Caco-2 (cell line): ENCODE measurements at regions of chr11 and their contacts with region 1.

Region 1: GRCh38 chr11:47373876-47374720 is 4.2 kb downstream of the SPI1 start:
- DNase-seq: peak; percentile 78 to 88
- H3K4me3 ChIP-seq: no peak overlapping the region
- H3K4me3 Mint-ChIP-seq: no peak overlapping the region
- H3K27ac Mint-ChIP-seq: no peak overlapping the region
- H3K4me1 ChIP-seq: peaks cover 4% of the 10 kb centered on the region; the same call in 1 of the 2 replicates
- H3K4me1 Mint-ChIP-seq: peaks cover 7% of the 10 kb centered on the region
- H3K27me3 ChIP-seq: no peaks in the 10 kb centered on the region
- H3K27me3 Mint-ChIP-seq: no peaks in the 10 kb centered on the region
- CTCF ChIP-seq: peak; percentile 95 to 96

Region 2: DNA sequence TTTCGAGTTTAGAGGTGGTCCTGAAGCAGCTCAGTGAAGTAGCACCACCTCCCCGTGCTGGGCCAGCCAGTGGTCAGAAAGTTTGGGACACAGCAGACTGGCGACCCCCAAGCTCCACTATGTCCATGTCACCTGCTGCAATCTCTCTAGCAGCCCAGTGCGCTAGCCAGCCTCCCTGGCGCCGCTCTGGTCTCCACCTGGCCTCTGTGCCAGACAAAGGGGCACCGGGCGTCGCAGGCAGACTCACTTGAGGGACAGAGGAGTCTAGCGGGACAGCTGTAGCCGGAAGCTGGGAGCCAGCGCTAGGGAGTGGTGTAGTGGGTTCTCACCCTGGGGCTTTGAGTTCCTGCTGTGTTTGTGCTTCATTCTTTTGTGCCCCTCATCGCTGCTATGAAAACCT is 47.1 kb before region 1 on chr11:
- CTCF ChIA-PET with region 1: no interaction called
- POLR2A ChIA-PET with region 1: no interaction called
- intact Hi-C with region 1: no loop called
- DNase-seq: peak in 1 of 2 experiments; percentile 29
- H3K4me3 ChIP-seq: no peak overlapping the region
- H3K4me3 Mint-ChIP-seq: no peak overlapping the region
- H3K27ac Mint-ChIP-seq: no peak overlapping the region
- H3K4me1 ChIP-seq: no peaks in the 10 kb centered on the region
- H3K4me1 Mint-ChIP-seq: no peaks in the 10 kb centered on the region
- H3K27me3 ChIP-seq: no peaks in the 10 kb centered on the region
- H3K27me3 Mint-ChIP-seq: no peaks in the 10 kb centered on the region
- CTCF ChIP-seq: no peak

Region 3: DNA sequence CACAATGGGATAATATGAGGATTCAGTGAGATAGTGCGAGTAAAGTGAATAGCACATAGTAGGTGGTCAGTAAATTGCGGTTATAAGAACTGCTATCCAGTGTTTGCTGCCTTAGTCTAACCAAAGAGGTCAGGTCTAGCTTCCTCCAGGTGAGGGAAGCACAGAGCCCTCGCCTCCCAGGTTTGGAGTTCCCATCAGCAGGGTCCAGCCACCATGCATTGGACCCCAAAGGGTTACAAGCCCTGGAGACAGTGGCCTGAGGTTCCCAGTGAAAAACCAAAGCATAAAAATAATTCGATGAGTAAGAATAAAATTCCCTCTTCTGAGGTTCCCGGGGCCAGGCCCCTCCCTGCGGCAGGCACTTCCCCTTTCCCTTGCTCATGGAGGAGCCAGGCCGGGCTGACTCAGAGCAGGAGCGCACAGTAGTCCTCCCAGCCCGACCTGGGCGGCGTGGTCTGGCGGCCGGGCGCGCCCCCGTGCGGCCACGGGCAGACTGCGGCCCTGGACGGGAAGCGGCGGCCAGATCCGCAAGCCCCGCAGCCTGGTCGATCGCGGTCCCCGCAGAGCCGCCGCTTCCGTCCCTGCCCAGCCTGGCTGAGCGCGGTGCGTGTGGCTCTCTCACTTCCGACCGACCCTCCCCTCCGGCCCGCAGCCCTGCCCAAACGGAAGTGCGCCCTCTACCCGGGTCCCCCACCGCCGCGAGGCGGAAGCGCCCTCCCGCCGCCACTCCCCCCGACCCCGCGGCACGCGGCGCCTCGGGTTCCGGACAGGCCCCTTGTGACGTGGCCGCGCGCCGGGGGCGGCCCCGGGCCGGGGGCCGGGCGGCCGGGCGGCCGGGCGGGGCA is 33.9 kb after region 1 on chr11 and contains the start of gene SLC39A13:
- CTCF ChIA-PET with region 1: interaction called, 5 read pairs
- POLR2A ChIA-PET with region 1: no interaction called
- intact Hi-C with region 1: loop called (anchors 1 kb)
- DNase-seq: peak; percentile 96 to 98
- H3K4me3 ChIP-seq: peak within 1 kb of the TSS; percentile 70
- H3K4me3 Mint-ChIP-seq: peak within 1 kb of the TSS; percentile 89
- H3K27ac Mint-ChIP-seq: peak within 1 kb of the TSS; percentile 82
- H3K4me1 ChIP-seq: peaks cover 9% of the 10 kb centered on the region; the same call in 1 of the 2 replicates
- H3K4me1 Mint-ChIP-seq: peaks cover 9% of the 10 kb centered on the region
- H3K27me3 ChIP-seq: no peaks in the 10 kb centered on the region
- H3K27me3 Mint-ChIP-seq: no peaks in the 10 kb centered on the region
- CTCF ChIP-seq: peak; percentile 60 to 85
- total RNA-seq, gene SLC39A13: 27.1 and 30.8 TPM in 2 replicates

Region 4: GRCh38 chr11:47454180-47454644 is 80.1 kb after region 1 on chr11:
- CTCF ChIA-PET with region 1: interaction called, 4 read pairs
- POLR2A ChIA-PET with region 1: no interaction called
- intact Hi-C with region 1: loop called (anchors 1 kb)
- DNase-seq: peak; percentile 83 to 88
- H3K4me3 ChIP-seq: no peak overlapping the region
- H3K4me3 Mint-ChIP-seq: no peak overlapping the region
- H3K27ac Mint-ChIP-seq: peak overlapping the region; percentile 40
- H3K4me1 ChIP-seq: no peaks in the 10 kb centered on the region
- H3K4me1 Mint-ChIP-seq: no peaks in the 10 kb centered on the region
- H3K27me3 ChIP-seq: no peaks in the 10 kb centered on the region
- H3K27me3 Mint-ChIP-seq: no peaks in the 10 kb centered on the region
- CTCF ChIP-seq: peak; percentile 67 to 93

Region 5: DNA sequence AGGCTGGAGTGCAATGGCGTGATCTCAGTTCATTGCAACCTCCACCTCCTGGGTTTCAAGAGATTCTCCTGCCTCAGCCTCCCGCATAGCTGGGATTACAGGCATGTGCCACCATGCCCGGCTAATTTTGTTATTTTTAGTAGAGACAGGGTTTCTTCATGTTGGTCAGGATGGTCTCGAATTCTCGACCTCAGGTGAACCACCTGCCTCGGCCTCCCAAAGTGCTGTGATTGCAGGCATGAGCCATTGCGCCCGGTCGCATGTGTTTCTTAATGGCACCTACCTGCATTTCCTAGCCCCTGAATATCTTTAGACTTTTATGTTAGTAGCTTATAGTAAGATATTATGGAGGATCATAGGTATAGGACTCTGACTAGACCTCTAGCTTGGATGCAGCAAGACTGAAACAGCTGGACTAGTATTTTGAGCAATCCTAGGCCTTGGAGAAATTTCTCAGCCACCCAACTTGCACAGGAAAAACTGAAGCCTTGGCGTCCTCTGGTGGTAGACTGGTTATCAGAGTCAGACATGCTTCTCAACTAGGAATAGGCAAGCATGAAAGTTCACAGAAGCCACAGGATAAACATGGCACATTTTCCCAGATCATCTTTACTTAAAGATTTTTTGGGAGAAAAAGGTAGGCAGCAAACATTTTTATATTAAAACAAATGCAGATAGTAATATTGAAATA is 242.8 kb after region 1 on chr11:
- CTCF ChIA-PET with region 1: no interaction called
- POLR2A ChIA-PET with region 1: no interaction called
- intact Hi-C with region 1: loop called (anchors 1 kb)
- DNase-seq: peak in 1 of 2 experiments; percentile 57
- H3K4me3 ChIP-seq: no peak overlapping the region
- H3K4me3 Mint-ChIP-seq: no peak overlapping the region
- H3K27ac Mint-ChIP-seq: no peak overlapping the region
- H3K4me1 ChIP-seq: no peaks in the 10 kb centered on the region
- H3K4me1 Mint-ChIP-seq: no peaks in the 10 kb centered on the region
- H3K27me3 ChIP-seq: no peaks in the 10 kb centered on the region
- H3K27me3 Mint-ChIP-seq: no peaks in the 10 kb centered on the region
- CTCF ChIP-seq: peak; percentile 47 to 84

Region 6: GRCh38 chr11:47858169-47858543 is 484.1 kb after region 1 on chr11:
- CTCF ChIA-PET with region 1: interaction called, 4 read pairs
- POLR2A ChIA-PET with region 1: no interaction called
- intact Hi-C with region 1: loop called (anchors 10 kb)
- DNase-seq: no peak
- H3K4me3 ChIP-seq: no peak overlapping the region
- H3K4me3 Mint-ChIP-seq: no peak overlapping the region
- H3K27ac Mint-ChIP-seq: no peak overlapping the region
- H3K4me1 ChIP-seq: peaks cover 17% of the 10 kb centered on the region; the same call in 1 of the 2 replicates
- H3K4me1 Mint-ChIP-seq: no peaks in the 10 kb centered on the region
- H3K27me3 ChIP-seq: no peaks in the 10 kb centered on the region
- H3K27me3 Mint-ChIP-seq: no peaks in the 10 kb centered on the region
- CTCF ChIP-seq: no peak